Left ventricle myocardium inferior (tissue), 1 donor: ENCODE measurements at regions of chr1 and their contacts with region 1.

Region 1: GRCh38 chr1:58816072-58816746 is 32.4 kb upstream of the JUN start:
- DNase-seq: peak; percentile 93
- H3K4me3 ChIP-seq: peak overlapping the region; percentile 75
- H3K27ac ChIP-seq: peak overlapping the region; percentile 96
- H3K4me1 ChIP-seq: peaks cover 52% of the 10 kb centered on the region
- H3K27me3 ChIP-seq: no peaks in the 10 kb centered on the region
- CTCF ChIP-seq: peak; percentile 36

Region 2: GRCh38 chr1:58755468-58755872 is 60.7 kb before region 1 on chr1:
- intact Hi-C with region 1: no loop called
- DNase-seq: peak; percentile 28
- H3K4me3 ChIP-seq: peak overlapping the region; percentile 36
- H3K27ac ChIP-seq: peak overlapping the region; percentile 82
- H3K4me1 ChIP-seq: peaks cover 20% of the 10 kb centered on the region
- H3K27me3 ChIP-seq: no peaks in the 10 kb centered on the region
- CTCF ChIP-seq: no peak

Region 3: GRCh38 chr1:58896246-58897183 is 80.3 kb after region 1 on chr1:
- intact Hi-C with region 1: loop called (anchors 10 kb)
- DNase-seq: peak; percentile 74
- H3K4me3 ChIP-seq: no peak overlapping the region
- H3K27ac ChIP-seq: peak overlapping the region; percentile 86
- H3K4me1 ChIP-seq: peaks cover 75% of the 10 kb centered on the region
- H3K27me3 ChIP-seq: no peaks in the 10 kb centered on the region
- CTCF ChIP-seq: no peak

Region 4: DNA sequence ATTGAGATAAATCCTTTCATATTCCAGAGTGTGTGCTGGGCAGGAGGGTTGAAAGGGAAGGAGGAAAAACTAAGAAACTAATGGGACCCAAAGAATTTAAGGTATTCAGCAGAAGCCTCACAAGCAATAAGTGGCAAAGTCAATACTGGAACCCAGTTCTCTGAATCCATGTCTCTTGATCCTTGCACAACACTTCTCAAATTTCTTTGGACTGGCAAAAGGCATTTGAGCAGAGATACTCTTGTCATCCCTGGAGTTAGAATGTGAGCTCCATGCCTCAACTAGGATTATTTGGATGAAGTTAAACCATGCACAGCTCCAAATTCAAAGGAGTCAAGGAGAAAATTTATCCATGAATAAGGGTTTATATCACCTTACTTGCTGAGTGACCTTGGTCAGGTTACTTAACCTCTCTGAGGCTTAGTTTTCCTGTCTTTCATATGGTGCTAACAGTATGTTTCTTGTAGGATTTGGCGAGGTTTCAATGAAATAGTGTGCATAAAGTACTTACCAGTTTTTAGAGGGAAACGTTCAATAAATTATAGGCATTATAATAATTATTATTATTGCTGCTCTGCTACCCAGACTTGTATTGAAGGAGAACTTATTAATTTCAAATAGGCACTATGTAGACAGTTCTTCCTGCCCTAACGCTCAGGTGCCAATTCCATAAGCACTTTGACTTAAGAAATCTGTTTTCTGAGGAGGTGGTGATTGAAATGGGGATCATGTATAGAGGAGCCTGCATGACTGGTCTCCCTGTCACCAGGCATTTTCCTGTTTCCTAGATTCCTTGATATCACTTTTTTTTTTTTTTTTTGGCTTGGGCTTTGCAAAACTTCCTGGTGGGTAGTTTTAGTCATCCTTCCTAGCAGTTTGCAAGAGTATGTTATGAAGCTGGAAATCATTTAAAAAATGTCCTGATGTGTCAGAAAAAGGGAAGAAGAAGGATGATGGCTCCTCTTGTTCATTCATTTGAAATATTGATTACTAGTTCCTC is 92.7 kb after region 1 on chr1:
- intact Hi-C with region 1: no loop called
- DNase-seq: no peak
- H3K4me3 ChIP-seq: no peak overlapping the region
- H3K27ac ChIP-seq: no peak overlapping the region
- H3K4me1 ChIP-seq: peaks cover 15% of the 10 kb centered on the region
- H3K27me3 ChIP-seq: no peaks in the 10 kb centered on the region
- CTCF ChIP-seq: no peak